CD4-positive, alpha-beta memory T cell (primary cell): ENCODE measurements at regions of chr17 and their contacts with region 1.

Region 1: DNA sequence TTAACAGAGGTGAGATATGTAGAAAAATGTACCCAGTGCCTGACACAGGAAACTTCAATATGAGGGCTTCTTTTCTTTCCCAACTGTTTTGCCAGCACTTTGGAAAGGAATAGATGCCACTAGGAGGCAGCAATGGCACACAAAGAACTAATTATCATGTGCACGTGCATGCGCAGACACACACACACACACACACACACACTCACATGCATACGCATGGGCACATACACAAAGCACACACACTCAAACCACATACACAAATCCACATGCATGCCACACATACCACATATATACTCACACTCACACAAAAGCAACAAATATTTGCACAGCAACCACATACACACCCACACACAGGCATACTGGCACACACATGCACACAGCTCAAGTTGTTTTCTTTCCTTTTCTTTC is 8.8 kb upstream of the CEP112 start:
- DNase-seq: peak; percentile 50 to 62 (median 55)
- H3K4me3 ChIP-seq: no peak overlapping the region
- H3K4me3 Mint-ChIP-seq: peak overlapping the region in 6 of 8 donors; percentile 14 to 63 (median 44)
- H3K27ac ChIP-seq: no peak overlapping the region
- H3K27ac Mint-ChIP-seq: peak overlapping the region in 5 of 7 donors; percentile 43 to 66 (median 58)
- H3K4me1 ChIP-seq: peaks cover 23% of the 10 kb centered on the region
- H3K4me1 Mint-ChIP-seq: peaks cover 15 to 22% (median 18%) of the 10 kb centered on the region in 4 donors
- H3K27me3 ChIP-seq: no peaks in the 10 kb centered on the region
- H3K27me3 Mint-ChIP-seq: no peaks in the 10 kb centered on the region

Region 2: GRCh38 chr17:66214884-66215528 is 14.3 kb after region 1 on chr17:
- CTCF ChIA-PET with region 1: interaction called, 28 read pairs
- POLR2A ChIA-PET with region 1: no interaction called
- intact Hi-C with region 1: no loop called
- DNase-seq: no peak
- H3K4me3 ChIP-seq: no peak overlapping the region
- H3K4me3 Mint-ChIP-seq: no peak overlapping the region
- H3K27ac ChIP-seq: no peak overlapping the region
- H3K27ac Mint-ChIP-seq: no peak overlapping the region
- H3K4me1 ChIP-seq: no peaks in the 10 kb centered on the region
- H3K4me1 Mint-ChIP-seq: no peaks in the 10 kb centered on the region
- H3K27me3 ChIP-seq: peaks cover 4% of the 10 kb centered on the region
- H3K27me3 Mint-ChIP-seq: peaks cover 0 to 4% of the 10 kb centered on the region in 2 donors

Region 3: GRCh38 chr17:66248285-66248684 is 47.6 kb after region 1 on chr17:
- CTCF ChIA-PET with region 1: interaction called, 24 read pairs
- POLR2A ChIA-PET with region 1: no interaction called
- intact Hi-C with region 1: loop called (anchors 1 kb)
- DNase-seq: no peak
- H3K4me3 ChIP-seq: no peak overlapping the region
- H3K4me3 Mint-ChIP-seq: no peak overlapping the region
- H3K27ac ChIP-seq: no peak overlapping the region
- H3K27ac Mint-ChIP-seq: no peak overlapping the region
- H3K4me1 ChIP-seq: peaks cover 40% of the 10 kb centered on the region
- H3K4me1 Mint-ChIP-seq: peaks cover 18 to 48% (median 31%) of the 10 kb centered on the region in 4 donors
- H3K27me3 ChIP-seq: no peaks in the 10 kb centered on the region
- H3K27me3 Mint-ChIP-seq: no peaks in the 10 kb centered on the region

Region 4: GRCh38 chr17:66301797-66302741 is 101.4 kb after region 1 on chr17 and contains the start of gene PRKCA:
- CTCF ChIA-PET with region 1: interaction called, 5 read pairs
- POLR2A ChIA-PET with region 1: no interaction called
- intact Hi-C with region 1: loop called (anchors 5 kb)
- DNase-seq: peak; percentile 60 to 78 (median 73)
- H3K4me3 ChIP-seq: peak within 1 kb of the TSS; percentile 63 to 86
- H3K4me3 Mint-ChIP-seq: peak within 1 kb of the TSS; percentile 94 to 100 (median 99)
- H3K27ac ChIP-seq: peak within 1 kb of the TSS; percentile 59
- H3K27ac Mint-ChIP-seq: peak within 1 kb of the TSS; percentile 90 to 97 (median 96)
- H3K4me1 ChIP-seq: peaks cover 42% of the 10 kb centered on the region
- H3K4me1 Mint-ChIP-seq: peaks cover 38 to 63% (median 46%) of the 10 kb centered on the region in 4 donors
- H3K27me3 ChIP-seq: no peaks in the 10 kb centered on the region
- H3K27me3 Mint-ChIP-seq: no peaks in the 10 kb centered on the region
- total RNA-seq, gene PRKCA: 107 TPM

Region 5: GRCh38 chr17:66567234-66568170 is 366.8 kb after region 1 on chr17:
- CTCF ChIA-PET with region 1: interaction called, 46 read pairs
- POLR2A ChIA-PET with region 1: interaction called, 5 read pairs
- intact Hi-C with region 1: loop called (anchors 1 kb)
- DNase-seq: peak; percentile 60 to 77 (median 62)
- H3K4me3 ChIP-seq: no peak overlapping the region
- H3K4me3 Mint-ChIP-seq: peak overlapping the region in 1 of 8 donors; percentile 21
- H3K27ac ChIP-seq: no peak overlapping the region
- H3K27ac Mint-ChIP-seq: peak overlapping the region in 3 of 7 donors; percentile 8 to 68 (median 9)
- H3K4me1 ChIP-seq: peaks cover 8% of the 10 kb centered on the region
- H3K4me1 Mint-ChIP-seq: peaks cover 21 to 32% (median 26%) of the 10 kb centered on the region in 4 donors
- H3K27me3 ChIP-seq: no peaks in the 10 kb centered on the region
- H3K27me3 Mint-ChIP-seq: no peaks in the 10 kb centered on the region

Region 6: GRCh38 chr17:66715745-66716156 is 515.1 kb after region 1 on chr17:
- CTCF ChIA-PET with region 1: interaction called, 3 read pairs
- POLR2A ChIA-PET with region 1: no interaction called
- intact Hi-C with region 1: loop called (anchors 5 kb)
- DNase-seq: peak in 4 of 5 donors; percentile 30 to 49 (median 36)
- H3K4me3 ChIP-seq: no peak overlapping the region
- H3K4me3 Mint-ChIP-seq: no peak overlapping the region
- H3K27ac ChIP-seq: no peak overlapping the region
- H3K27ac Mint-ChIP-seq: peak overlapping the region in 2 of 7 donors; percentile 31 to 48
- H3K4me1 ChIP-seq: peaks cover 12% of the 10 kb centered on the region
- H3K4me1 Mint-ChIP-seq: peaks cover 13 to 38% (median 27%) of the 10 kb centered on the region in 4 donors
- H3K27me3 ChIP-seq: no peaks in the 10 kb centered on the region
- H3K27me3 Mint-ChIP-seq: no peaks in the 10 kb centered on the region